GM13976 (cell line): ENCODE measurements at regions of chr17 and their contacts with region 1.

Region 1: DNA sequence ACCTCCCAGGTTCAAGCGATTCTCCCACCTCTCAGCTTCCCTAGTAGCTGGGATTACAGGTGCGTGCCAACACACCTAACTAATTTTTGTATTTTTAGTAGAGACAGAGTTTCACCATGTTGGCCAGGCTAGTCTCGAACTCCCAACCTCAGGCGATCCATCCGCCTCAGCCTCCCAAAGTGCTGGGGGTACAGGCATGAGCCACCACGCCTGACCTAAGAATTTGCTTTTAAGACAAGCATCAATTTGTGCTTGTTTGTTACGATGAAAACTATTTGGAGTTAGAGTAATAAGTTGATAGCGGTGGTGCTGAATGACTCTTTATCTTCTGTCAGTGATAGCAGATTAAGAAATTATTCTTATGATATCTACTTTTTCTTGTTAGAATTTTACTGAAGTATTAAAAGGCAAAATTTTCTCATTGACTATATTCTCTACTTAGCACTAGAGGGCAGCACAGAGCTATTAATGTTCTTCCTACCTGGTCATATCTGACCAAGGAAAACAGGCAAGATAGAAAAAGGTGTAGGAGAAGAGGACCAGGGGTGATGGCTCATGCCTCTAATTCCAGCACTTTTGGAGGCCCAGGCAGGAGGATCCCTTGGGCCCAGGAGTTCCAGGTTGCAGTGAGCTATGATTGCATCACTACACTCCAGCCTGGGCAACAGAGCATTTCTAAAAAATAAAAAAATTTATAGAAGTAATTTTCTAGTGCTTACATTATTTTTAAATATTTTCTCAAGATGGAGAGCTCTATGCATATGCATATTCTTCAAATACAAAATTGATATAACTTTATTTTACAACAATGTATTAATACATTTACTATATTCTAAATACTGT is 24.5 kb downstream of the STXBP4 start:
- DNase-seq: peak; percentile 46
- CTCF ChIP-seq: peak; percentile 30

Region 2: GRCh38 chr17:55295411-55296170 is 302.6 kb after region 1 on chr17:
- in situ Hi-C with region 1: loop called (anchors 10 kb)
- DNase-seq: peak; percentile 67
- CTCF ChIP-seq: peak; percentile 76

Region 3: GRCh38 chr17:55356434-55357328 is 363.7 kb after region 1 on chr17:
- in situ Hi-C with region 1: loop called (anchors 10 kb)
- DNase-seq: peak; percentile 68
- CTCF ChIP-seq: peak; percentile 76

Region 4: GRCh38 chr17:55513885-55514591 is 521.0 kb after region 1 on chr17:
- in situ Hi-C with region 1: loop called (anchors 10 kb)
- DNase-seq: peak; percentile 63
- CTCF ChIP-seq: peak; percentile 81

Region 5: DNA sequence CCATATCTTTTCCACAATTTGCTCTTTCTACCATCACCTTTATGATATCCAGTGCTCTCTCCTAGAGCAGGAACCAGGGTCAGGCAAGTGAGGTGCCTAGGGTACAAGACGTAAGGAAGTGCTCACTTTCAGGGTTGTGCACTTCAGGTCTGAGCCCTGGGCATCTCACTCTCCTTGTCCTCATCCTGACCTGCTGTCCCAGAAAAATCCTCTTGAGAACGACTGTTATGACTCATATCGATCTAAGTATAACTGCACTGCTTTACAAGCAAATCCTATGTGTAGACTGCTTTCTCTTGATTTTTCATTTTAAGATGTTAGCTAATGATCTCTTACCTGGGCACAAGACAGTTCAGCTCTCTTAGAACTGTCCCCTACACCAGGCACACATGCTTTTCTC is 629.5 kb after region 1 on chr17:
- in situ Hi-C with region 1: no loop called
- DNase-seq: no peak
- CTCF ChIP-seq: no peak